Activated T-helper 2 cell treated with anti-CD3 and anti-CD28 coated beads, Interferon-gamma antibody, Interleukin-2, Interleukin-4, amounts not matched to agents 10 μg/mL and 5 μg/mL and 100 μg/mL, durations not matched to agents 14 hours and 24 hours and 36 hours (primary cell): ENCODE measurements at regions of chr5 and their contacts with region 1.

Region 1: DNA sequence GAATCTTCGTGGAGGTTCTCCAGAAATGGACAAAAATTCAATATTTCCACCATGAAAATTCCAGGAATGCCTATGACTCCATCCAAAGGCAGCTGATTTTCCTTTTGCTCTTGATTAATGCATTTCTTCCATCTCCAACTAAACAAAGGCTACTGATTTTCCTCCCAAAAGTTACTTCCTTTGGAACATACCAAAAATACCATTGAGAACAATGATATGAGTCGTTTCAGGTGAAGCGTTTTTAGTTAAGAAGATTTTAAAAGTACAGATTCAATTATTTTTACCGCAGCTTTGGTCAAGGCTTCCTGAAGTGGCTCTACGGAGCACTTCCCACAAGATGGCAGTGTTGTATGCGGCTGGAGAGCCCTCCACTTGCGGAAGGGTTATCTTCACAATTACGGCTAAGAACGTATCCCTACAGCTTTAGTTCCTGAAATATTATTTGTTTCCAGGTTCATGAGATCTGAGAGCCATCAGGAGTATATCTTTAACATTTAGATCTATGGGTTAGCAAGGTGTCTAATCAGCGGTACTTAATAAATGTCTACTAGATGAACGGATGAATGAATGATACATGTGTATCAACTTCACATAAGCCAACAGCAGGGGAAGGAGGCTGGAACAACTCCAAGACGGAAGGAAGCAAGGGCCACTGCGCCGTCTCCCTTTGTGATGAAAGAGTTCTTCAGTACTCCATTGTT is 35.9 kb upstream of the ARSB start:
- DNase-seq: peak; percentile 10
- H3K4me3 Mint-ChIP-seq: no peak overlapping the region
- H3K27ac Mint-ChIP-seq: no peak overlapping the region
- H3K4me1 Mint-ChIP-seq: peaks cover 13% of the 10 kb centered on the region
- H3K27me3 Mint-ChIP-seq: peaks cover 71% of the 10 kb centered on the region

Region 2: GRCh38 chr5:78899922-78900362 is 121.1 kb before region 1 on chr5:
- intact Hi-C with region 1: loop called (anchors 2 kb)
- DNase-seq: no peak
- H3K4me3 Mint-ChIP-seq: no peak overlapping the region
- H3K27ac Mint-ChIP-seq: no peak overlapping the region
- H3K4me1 Mint-ChIP-seq: no peaks in the 10 kb centered on the region
- H3K27me3 Mint-ChIP-seq: no peaks in the 10 kb centered on the region

Region 3: DNA sequence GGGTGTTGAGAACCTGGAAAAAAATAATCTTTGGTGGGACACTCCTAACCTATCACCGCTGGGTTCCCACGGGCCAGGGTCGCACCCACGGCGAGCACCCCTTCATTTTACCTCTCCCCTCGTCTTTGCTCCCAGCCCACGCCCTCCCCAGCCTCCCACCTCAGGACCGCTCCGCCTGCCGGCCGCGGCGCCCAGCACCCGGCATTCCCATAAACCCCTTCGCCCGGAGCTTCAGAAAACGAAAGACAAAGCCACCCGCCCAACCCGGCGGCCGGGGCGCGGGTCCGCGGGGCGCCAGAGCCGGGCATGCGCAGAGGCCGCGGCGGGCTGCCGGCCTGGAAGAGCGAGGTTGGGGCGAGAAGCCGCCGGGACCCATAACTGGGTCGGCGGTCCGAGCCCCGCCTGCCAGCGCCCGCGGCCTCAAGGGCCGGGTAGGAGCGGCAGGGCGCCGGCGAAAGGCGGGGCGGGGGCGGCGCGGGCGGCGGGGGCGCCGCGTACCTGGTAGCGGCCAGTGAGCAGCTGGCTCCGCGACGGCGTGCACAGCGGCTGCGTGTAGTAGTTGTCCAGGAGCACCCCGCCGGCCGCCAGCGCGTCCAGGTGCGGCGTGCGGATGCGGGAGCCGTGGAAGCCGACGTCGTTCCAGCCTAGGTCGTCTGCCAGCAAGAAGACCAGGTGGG is 36.4 kb before region 1 on chr5:
- intact Hi-C with region 1: loop called (anchors 2 kb)
- DNase-seq: peak; percentile 80
- H3K4me3 Mint-ChIP-seq: peak overlapping the region; percentile 85
- H3K27ac Mint-ChIP-seq: peak overlapping the region; percentile 87
- H3K4me1 Mint-ChIP-seq: peaks cover 44% of the 10 kb centered on the region
- H3K27me3 Mint-ChIP-seq: no peaks in the 10 kb centered on the region

Region 4: GRCh38 chr5:79109527-79110492 is 88.8 kb after region 1 on chr5:
- intact Hi-C with region 1: loop called (anchors 1 kb)
- DNase-seq: no peak
- H3K4me3 Mint-ChIP-seq: no peak overlapping the region
- H3K27ac Mint-ChIP-seq: no peak overlapping the region
- H3K4me1 Mint-ChIP-seq: peaks cover 3% of the 10 kb centered on the region
- H3K27me3 Mint-ChIP-seq: peaks cover 71% of the 10 kb centered on the region

Region 5: DNA sequence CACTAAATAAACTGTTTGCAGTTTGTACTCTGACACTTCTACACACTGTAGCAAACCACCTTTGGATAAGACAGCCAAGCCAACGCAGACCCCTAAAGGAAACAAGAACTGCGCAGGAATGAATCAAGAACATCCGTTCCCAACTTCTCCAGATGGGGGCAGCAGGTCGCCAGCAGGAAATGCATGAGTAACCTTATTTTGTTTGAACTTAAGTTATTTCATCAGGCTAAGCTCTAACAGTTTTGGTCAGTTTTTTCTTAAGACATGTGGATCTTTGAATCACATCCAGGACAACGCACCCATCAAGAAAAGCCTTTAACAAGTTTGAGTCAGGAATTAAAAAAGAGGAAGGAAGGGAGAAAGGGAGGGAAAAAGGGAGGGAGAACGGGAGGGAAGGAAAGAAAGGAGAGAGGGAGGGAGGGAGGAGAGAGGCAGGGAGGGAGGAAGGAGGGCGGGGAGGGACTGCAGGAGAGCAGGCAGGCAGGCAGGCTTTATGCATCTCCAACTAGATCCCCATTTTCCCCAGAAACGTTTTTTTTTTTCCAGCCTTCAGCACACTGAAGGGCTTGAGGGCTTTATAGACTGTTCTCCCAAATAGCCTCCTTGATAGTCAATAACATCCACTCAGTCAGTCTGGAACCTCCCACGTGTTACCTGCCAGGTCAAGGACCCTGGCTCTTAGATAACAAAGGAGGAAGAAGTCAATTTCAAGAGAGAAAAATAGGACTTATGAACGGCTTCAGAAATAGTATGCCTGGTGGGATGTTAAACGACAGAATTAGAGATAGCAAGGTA is 112.8 kb after region 1 on chr5:
- intact Hi-C with region 1: loop called (anchors 1 kb)
- DNase-seq: peak; percentile 45
- H3K4me3 Mint-ChIP-seq: peak overlapping the region; percentile 72
- H3K27ac Mint-ChIP-seq: peak overlapping the region; percentile 80
- H3K4me1 Mint-ChIP-seq: peaks cover 8% of the 10 kb centered on the region
- H3K27me3 Mint-ChIP-seq: peaks cover 3% of the 10 kb centered on the region

Region 6: GRCh38 chr5:79464695-79465332 is 443.8 kb after region 1 on chr5:
- intact Hi-C with region 1: loop called (anchors 10 kb)
- DNase-seq: no peak
- H3K4me3 Mint-ChIP-seq: no peak overlapping the region
- H3K27ac Mint-ChIP-seq: no peak overlapping the region
- H3K4me1 Mint-ChIP-seq: peaks cover 2% of the 10 kb centered on the region
- H3K27me3 Mint-ChIP-seq: peaks cover 3% of the 10 kb centered on the region

Region 7: GRCh38 chr5:80083101-80083890 is 1062.3 kb after region 1 on chr5:
- intact Hi-C with region 1: loop called (anchors 10 kb)
- DNase-seq: peak; percentile 18
- H3K4me3 Mint-ChIP-seq: peak overlapping the region; percentile 72
- H3K27ac Mint-ChIP-seq: peak overlapping the region; percentile 74
- H3K4me1 Mint-ChIP-seq: peaks cover 7% of the 10 kb centered on the region
- H3K27me3 Mint-ChIP-seq: peaks cover 4% of the 10 kb centered on the region